Gastrocnemius medialis (tissue), 4 donors: ENCODE measurements at regions of chr1 and their contacts with region 1.

Region 1: GRCh38 chr1:19149736-19150135 is 60.3 kb downstream of the UBR4 start:
- DNase-seq: no peak
- ATAC-seq: no peak
- H3K4me3 ChIP-seq: no peak overlapping the region
- H3K27ac ChIP-seq: no peak overlapping the region
- H3K4me1 ChIP-seq: no peaks in the 10 kb centered on the region
- H3K27me3 ChIP-seq: no peaks in the 10 kb centered on the region
- CTCF ChIP-seq: no peak
- POLR2A ChIP-seq: no peak

Region 2: DNA sequence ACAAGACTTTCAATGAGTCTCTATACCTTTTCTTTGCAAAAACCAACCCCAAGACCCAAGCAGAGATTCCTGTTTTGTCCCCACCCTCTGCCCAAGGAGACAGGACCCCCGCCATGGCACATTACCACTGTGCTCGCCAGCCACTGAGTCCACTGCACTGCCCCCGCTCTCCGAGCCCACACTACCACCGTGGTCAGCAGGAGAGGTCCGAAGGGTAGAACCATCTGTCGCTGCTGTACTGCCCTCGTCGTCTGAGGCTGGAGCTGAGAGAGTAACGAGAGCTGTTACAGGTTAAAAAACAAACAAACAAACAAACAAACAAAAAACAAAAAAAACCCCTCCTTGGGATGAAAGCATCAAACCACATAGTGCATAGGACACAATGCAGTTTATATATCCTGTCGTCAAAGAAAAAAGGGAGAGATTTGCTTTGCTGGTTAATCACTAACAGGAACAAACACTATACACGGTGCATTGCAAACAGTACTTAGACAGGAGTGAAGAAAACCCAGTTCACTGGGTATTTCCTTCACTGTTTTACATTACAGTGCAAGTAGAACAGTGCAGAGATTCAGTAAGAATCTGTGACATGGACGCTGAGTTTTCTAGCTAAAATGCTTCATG is 10.7 kb before region 1 on chr1:
- in situ Hi-C with region 1: no loop called
- intact Hi-C with region 1: no loop called
- DNase-seq: no peak
- ATAC-seq: no peak
- H3K4me3 ChIP-seq: no peak overlapping the region
- H3K27ac ChIP-seq: no peak overlapping the region
- H3K4me1 ChIP-seq: no peaks in the 10 kb centered on the region
- H3K27me3 ChIP-seq: no peaks in the 10 kb centered on the region
- CTCF ChIP-seq: no peak
- POLR2A ChIP-seq: no peak

Region 3: GRCh38 chr1:19169642-19170041 is 19.9 kb after region 1 on chr1:
- in situ Hi-C with region 1: no loop called
- intact Hi-C with region 1: no loop called
- DNase-seq: no peak
- ATAC-seq: no peak
- H3K4me3 ChIP-seq: no peak overlapping the region
- H3K27ac ChIP-seq: peak overlapping the region in 2 of 4 donors; percentile 13 to 31
- H3K4me1 ChIP-seq: no peaks in the 10 kb centered on the region
- H3K27me3 ChIP-seq: no peaks in the 10 kb centered on the region
- CTCF ChIP-seq: no peak
- POLR2A ChIP-seq: no peak

Region 4: DNA sequence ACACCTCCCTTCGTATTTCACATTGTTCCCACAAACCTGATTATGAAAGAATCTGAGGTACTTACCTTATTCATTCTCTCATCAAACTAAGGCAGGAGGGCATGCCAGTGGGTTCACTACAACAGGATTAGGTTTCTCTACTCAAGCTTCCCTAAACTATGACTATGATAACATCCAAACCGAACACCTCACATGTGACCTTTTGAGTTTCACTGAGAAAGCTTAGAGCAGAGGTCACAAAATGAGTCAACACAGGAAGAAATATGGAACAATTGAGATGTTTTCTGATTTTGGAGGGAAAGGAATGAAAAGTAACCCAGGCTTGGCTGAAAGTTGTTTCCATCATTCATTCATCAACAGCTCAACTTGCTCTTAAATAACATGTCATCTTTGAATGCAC is 36.3 kb after region 1 on chr1:
- in situ Hi-C with region 1: no loop called
- intact Hi-C with region 1: loop called (anchors 5 kb)
- DNase-seq: no peak
- ATAC-seq: no peak
- H3K4me3 ChIP-seq: no peak overlapping the region
- H3K27ac ChIP-seq: no peak overlapping the region
- H3K4me1 ChIP-seq: no peaks in the 10 kb centered on the region
- H3K27me3 ChIP-seq: no peaks in the 10 kb centered on the region
- CTCF ChIP-seq: no peak
- POLR2A ChIP-seq: no peak